Activated T-helper 1 cell treated with anti-CD3 and anti-CD28 coated beads, Interleukin-12 subunit alpha, Interleukin-12 subunit beta, Interleukin-2, Interleukin-4 antibody, amounts not matched to agents 30 ng/mL and 10 ng/mL and 1 ng/mL, durations not matched to agents 14 hours and 24 hours and 36 hours (primary cell): ENCODE measurements at regions of chr11 and their contacts with region 1.

Region 1: DNA sequence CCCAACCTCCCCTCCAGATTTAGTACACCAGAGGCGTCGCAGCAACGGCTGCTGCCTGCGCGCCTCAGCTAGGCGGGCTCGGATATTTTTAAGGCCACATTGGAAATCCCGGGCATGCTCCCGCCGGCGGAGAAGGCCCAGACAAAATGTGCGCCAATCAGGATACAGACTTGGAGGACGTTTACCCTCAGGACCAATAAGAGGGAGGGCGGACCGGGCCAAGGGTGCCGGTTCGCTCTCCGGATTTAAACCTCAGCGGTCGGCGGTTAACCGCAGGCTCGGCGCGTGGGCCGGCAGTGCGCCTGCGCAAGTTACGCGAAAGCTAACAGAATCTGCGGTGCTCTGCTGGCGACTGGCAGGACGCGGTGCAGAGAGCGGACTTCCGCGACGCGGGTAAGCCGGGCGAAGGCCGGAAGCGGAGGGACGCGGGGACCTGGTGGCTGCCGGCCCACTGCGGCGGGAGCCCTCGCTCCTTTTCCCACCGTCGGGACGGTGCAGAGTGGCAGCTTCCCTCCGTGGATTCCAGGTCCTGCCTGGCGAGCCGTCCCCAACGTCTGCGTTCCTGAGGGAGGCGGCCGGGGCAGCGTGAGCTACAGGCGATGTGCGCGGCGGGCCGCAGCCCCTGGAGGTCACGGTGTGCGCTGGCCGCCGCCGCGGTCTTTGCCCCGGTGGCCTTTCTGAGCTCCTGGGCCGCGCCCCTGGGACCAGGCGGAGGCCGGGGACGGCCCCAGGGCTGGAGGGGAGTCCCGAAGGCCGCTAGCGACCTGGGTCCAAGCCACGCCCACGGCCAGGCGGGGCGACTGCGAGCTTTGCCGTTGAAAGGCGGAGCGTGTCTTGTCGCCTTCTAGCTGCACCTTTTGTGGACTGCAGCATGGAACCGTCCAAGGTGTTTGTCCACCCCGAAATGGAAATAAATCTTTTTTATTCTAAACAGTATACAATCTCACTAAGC is at the start of gene HYLS1:
- DNase-seq: peak; percentile 99
- H3K4me3 Mint-ChIP-seq: peak within 1 kb of the TSS; percentile 82
- H3K27ac Mint-ChIP-seq: peak within 1 kb of the TSS; percentile 97
- H3K4me1 Mint-ChIP-seq: peaks cover 35% of the 10 kb centered on the region
- H3K27me3 Mint-ChIP-seq: peaks cover 6% of the 10 kb centered on the region
- total RNA-seq, gene HYLS1: 6.5 and 6.8 TPM in 2 replicates

Region 2: GRCh38 chr11:124800226-124800929 is 1087.3 kb before region 1 on chr11 and contains the start of gene MSANTD2:
- intact Hi-C with region 1: loop called (anchors 5 kb)
- DNase-seq: peak; percentile 79
- H3K4me3 Mint-ChIP-seq: peak within 1 kb of the TSS; percentile 91
- H3K27ac Mint-ChIP-seq: peak within 1 kb of the TSS; percentile 92
- H3K4me1 Mint-ChIP-seq: peaks cover 28% of the 10 kb centered on the region
- H3K27me3 Mint-ChIP-seq: peaks cover 8% of the 10 kb centered on the region
- total RNA-seq, gene MSANTD2: 8.9 and 9.7 TPM in 2 replicates

Region 3: GRCh38 chr11:125320347-125321076 is 567.1 kb before region 1 on chr11:
- intact Hi-C with region 1: no loop called
- DNase-seq: no peak
- H3K4me3 Mint-ChIP-seq: no peak overlapping the region
- H3K27ac Mint-ChIP-seq: no peak overlapping the region
- H3K4me1 Mint-ChIP-seq: no peaks in the 10 kb centered on the region
- H3K27me3 Mint-ChIP-seq: peaks cover 17% of the 10 kb centered on the region

Region 4: GRCh38 chr11:125568970-125569914 is 318.4 kb before region 1 on chr11 and contains the start of gene EI24:
- intact Hi-C with region 1: loop called (anchors 1 kb)
- DNase-seq: peak; percentile 88
- H3K4me3 Mint-ChIP-seq: peak within 1 kb of the TSS; percentile 95
- H3K27ac Mint-ChIP-seq: peak within 1 kb of the TSS; percentile 94
- H3K4me1 Mint-ChIP-seq: peaks cover 23% of the 10 kb centered on the region
- H3K27me3 Mint-ChIP-seq: no peaks in the 10 kb centered on the region
- total RNA-seq, gene EI24: 61.6 and 62.4 TPM in 2 replicates

Region 5: GRCh38 chr11:125663910-125664309 is 223.7 kb before region 1 on chr11:
- intact Hi-C with region 1: loop called (anchors 5 kb)
- DNase-seq: no peak
- H3K4me3 Mint-ChIP-seq: no peak overlapping the region
- H3K27ac Mint-ChIP-seq: peak overlapping the region; percentile 87
- H3K4me1 Mint-ChIP-seq: peaks cover 30% of the 10 kb centered on the region
- H3K27me3 Mint-ChIP-seq: no peaks in the 10 kb centered on the region

Region 6: DNA sequence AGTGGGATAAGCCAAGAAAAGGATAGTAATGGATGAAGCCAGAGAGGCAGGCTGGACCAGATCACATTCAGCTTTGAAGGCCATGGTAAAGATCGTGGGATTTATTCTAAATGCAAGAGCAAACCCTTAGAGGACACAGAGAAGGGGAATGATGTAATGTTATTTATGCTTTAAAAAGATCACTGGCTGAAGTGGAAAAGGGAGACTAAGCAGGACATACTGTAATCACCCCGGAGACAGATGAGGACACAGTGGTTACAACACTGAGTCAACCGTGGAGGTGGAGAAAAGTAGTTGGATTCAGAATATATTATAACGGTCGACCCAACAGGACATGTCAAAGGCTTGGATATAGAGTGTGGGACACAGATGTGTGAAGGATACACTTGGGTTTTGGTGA is 136.5 kb after region 1 on chr11:
- intact Hi-C with region 1: no loop called
- DNase-seq: no peak
- H3K4me3 Mint-ChIP-seq: no peak overlapping the region
- H3K27ac Mint-ChIP-seq: no peak overlapping the region
- H3K4me1 Mint-ChIP-seq: no peaks in the 10 kb centered on the region
- H3K27me3 Mint-ChIP-seq: no peaks in the 10 kb centered on the region

Region 7: GRCh38 chr11:126211235-126212088 is 323.8 kb after region 1 on chr11 and contains the starts of genes FAM118B and RPUSD4:
- intact Hi-C with region 1: loop called (anchors 1 kb)
- DNase-seq: peak; percentile 98
- H3K4me3 Mint-ChIP-seq: peak within 1 kb of the TSS; percentile 99
- H3K27ac Mint-ChIP-seq: peak within 1 kb of the TSS; percentile 98
- H3K4me1 Mint-ChIP-seq: peaks cover 34% of the 10 kb centered on the region
- H3K27me3 Mint-ChIP-seq: no peaks in the 10 kb centered on the region
- total RNA-seq, gene FAM118B: 13.2 and 16.4 TPM in 2 replicates
- total RNA-seq, gene RPUSD4: 49.2 and 49.8 TPM in 2 replicates

Region 8: DNA sequence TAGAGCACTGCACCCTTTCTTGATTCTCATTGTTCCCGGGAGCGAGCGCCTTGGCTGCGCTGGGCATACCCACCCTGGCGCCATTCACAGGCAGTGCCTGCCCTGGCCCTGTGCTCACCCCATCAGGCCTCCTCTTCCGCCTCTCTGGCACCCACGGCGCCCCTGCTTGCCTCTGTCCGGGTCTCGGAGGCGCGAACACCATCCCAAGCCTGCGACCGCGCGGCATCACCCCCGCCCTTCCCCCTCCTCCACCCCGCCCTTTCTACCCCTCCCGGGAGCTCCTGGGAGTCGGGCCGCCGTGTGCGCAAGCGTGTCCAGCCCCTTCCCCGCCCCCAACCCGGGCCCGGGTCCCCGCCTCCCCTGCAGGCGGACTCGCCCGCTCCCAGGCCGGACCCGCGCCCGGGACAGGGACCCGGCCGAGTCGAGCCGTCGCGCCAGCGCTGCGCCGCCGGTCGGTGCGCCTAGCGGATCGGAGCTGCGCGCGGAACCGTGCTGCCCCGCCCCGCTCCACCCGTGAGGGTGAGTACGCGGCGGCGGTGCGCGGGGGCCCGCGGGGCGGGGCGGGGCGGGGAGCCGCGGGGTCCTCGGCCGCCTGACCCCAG is 467.8 kb after region 1 on chr11 and contains the start of gene ST3GAL4:
- intact Hi-C with region 1: loop called (anchors 1 kb)
- DNase-seq: peak; percentile 64
- H3K4me3 Mint-ChIP-seq: peak within 1 kb of the TSS; percentile 95
- H3K27ac Mint-ChIP-seq: peak within 1 kb of the TSS; percentile 92
- H3K4me1 Mint-ChIP-seq: peaks cover 36% of the 10 kb centered on the region
- H3K27me3 Mint-ChIP-seq: no peaks in the 10 kb centered on the region
- total RNA-seq, gene ST3GAL4: 13.2 and 14.1 TPM in 2 replicates